ENCODE measurements at regions of chr2 and their contacts with region 1.

Region 1: GRCh38 chr2:15939854-15940660 is at the start of gene MYCN:
- DNase-seq: peak; percentile 80
- H3K4me3 ChIP-seq: peak within 1 kb of the TSS; percentile 51
- H3K27ac ChIP-seq: no peak within 1 kb of the TSS
- H3K4me1 ChIP-seq: peaks cover 6% of the 10 kb centered on the region
- H3K27me3 ChIP-seq: peaks cover 17% of the 10 kb centered on the region
- CTCF ChIP-seq: peak; percentile 74
- total RNA-seq, gene MYCN: 1.5 to 1.7 TPM

Region 2: GRCh38 chr2:15636972-15637785 is 302.9 kb before region 1 on chr2:
- intact Hi-C with region 1: loop called (anchors 10 kb)
- DNase-seq: peak; percentile 67
- H3K4me3 ChIP-seq: no peak overlapping the region
- H3K27ac ChIP-seq: no peak overlapping the region
- H3K4me1 ChIP-seq: no peaks in the 10 kb centered on the region
- H3K27me3 ChIP-seq: no peaks in the 10 kb centered on the region
- CTCF ChIP-seq: peak; percentile 69

Region 3: GRCh38 chr2:16218625-16219024 is 278.6 kb after region 1 on chr2:
- intact Hi-C with region 1: loop called (anchors 2 kb)
- DNase-seq: peak; percentile 60
- H3K4me3 ChIP-seq: no peak overlapping the region
- H3K27ac ChIP-seq: no peak overlapping the region
- H3K4me1 ChIP-seq: no peaks in the 10 kb centered on the region
- H3K27me3 ChIP-seq: no peaks in the 10 kb centered on the region
- CTCF ChIP-seq: peak; percentile 38

Region 4: GRCh38 chr2:16281451-16282336 is 341.6 kb after region 1 on chr2:
- intact Hi-C with region 1: loop called (anchors 2 kb)
- DNase-seq: no peak
- H3K4me3 ChIP-seq: no peak overlapping the region
- H3K27ac ChIP-seq: no peak overlapping the region
- H3K4me1 ChIP-seq: no peaks in the 10 kb centered on the region
- H3K27me3 ChIP-seq: no peaks in the 10 kb centered on the region
- CTCF ChIP-seq: peak; percentile 44

Region 5: DNA sequence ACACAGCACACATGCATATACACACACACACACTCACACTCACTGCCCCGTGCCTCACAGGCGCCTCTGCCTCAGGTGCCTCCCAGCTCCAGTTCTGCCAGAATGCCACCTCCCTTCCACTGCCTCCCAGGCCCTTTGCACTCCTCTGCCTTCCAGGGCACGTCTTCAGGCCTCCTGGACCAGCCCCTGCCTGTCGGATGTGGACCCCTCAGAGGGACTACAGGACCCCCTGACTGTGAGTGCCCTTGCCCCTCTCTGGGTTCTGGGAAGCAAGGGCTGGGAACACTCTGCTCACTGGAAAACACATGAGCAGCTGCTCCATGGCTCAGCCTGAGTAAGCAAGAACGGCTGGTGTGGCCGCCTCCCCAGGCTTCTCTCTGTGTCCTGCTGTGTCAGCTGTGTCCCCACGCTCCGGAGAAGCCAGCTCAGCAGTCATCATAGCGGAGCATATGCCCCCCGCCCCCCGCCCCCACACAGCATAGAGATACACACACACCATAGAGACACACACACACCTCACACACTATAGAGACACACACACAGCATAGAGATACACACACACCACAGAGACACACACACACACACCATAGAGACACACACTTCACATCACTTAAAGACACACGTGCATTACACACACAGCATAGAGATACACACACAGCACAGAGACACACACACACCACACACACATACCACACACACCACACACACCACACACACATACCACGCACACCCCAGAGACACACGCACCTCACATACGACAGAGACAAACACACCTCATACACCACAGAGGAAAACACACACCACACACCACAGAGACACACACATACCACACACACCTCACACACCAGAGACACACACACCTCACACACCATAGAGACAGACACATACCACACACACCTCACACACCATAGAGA is 454.3 kb after region 1 on chr2:
- intact Hi-C with region 1: no loop called
- DNase-seq: no peak
- H3K4me3 ChIP-seq: no peak overlapping the region
- H3K27ac ChIP-seq: no peak overlapping the region
- H3K4me1 ChIP-seq: no peaks in the 10 kb centered on the region
- H3K27me3 ChIP-seq: no peaks in the 10 kb centered on the region
- CTCF ChIP-seq: no peak

Region 6: DNA sequence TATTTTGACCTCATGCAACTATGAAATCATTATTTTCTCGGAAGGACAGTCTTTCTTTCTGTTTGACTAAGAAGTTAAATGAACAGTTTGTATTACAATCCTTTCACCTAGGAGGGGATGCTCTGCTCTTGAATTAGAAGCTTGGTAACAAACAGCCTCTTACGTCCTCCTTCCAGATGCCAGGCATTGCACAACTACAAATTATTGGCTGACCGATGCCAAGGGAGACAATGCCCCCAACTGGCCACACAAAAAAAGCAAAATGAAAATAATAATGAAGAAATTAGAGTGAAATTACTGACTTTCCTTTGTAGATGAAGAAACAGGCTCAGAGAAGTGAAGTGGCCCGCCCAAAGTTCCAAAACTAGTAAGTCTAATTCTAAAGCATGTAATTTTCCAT is 547.6 kb after region 1 on chr2:
- intact Hi-C with region 1: loop called (anchors 5 kb)
- DNase-seq: no peak
- H3K4me3 ChIP-seq: no peak overlapping the region
- H3K27ac ChIP-seq: no peak overlapping the region
- H3K4me1 ChIP-seq: no peaks in the 10 kb centered on the region
- H3K27me3 ChIP-seq: no peaks in the 10 kb centered on the region
- CTCF ChIP-seq: no peak

Region 7: GRCh38 chr2:16507655-16508489 is 567.8 kb after region 1 on chr2:
- intact Hi-C with region 1: loop called (anchors 5 kb)
- DNase-seq: peak; percentile 41
- H3K4me3 ChIP-seq: peak overlapping the region; percentile 41
- H3K27ac ChIP-seq: no peak overlapping the region
- H3K4me1 ChIP-seq: no peaks in the 10 kb centered on the region
- H3K27me3 ChIP-seq: peaks cover 23% of the 10 kb centered on the region
- CTCF ChIP-seq: peak; percentile 63